PC-3 (cell line): ENCODE measurements at regions of chr12 and their contacts with region 1.

Region 1: GRCh38 chr12:107093417-107094182 is at the start of gene CRY1:
- DNase-seq: peak; percentile 98
- ATAC-seq: peak; percentile 75
- H3K4me3 ChIP-seq: peak within 1 kb of the TSS; percentile 72
- H3K27ac ChIP-seq: peak within 1 kb of the TSS; percentile 63
- H3K4me1 ChIP-seq: peaks cover 24% of the 10 kb centered on the region
- H3K27me3 ChIP-seq: no peaks in the 10 kb centered on the region
- CTCF ChIP-seq: no peak
- total RNA-seq, gene CRY1: 32.0 and 32.4 TPM in 2 replicates

Region 2: GRCh38 chr12:106790020-106790419 is 303.6 kb before region 1 on chr12:
- CTCF ChIA-PET with region 1: no interaction called
- POLR2A ChIA-PET with region 1: no interaction called
- intact Hi-C with region 1: no loop called
- DNase-seq: peak; percentile 28
- ATAC-seq: peak; percentile 61; the same call in 1 of the 2 replicates
- H3K4me3 ChIP-seq: no peak overlapping the region
- H3K27ac ChIP-seq: no peak overlapping the region
- H3K4me1 ChIP-seq: no peaks in the 10 kb centered on the region
- H3K27me3 ChIP-seq: no peaks in the 10 kb centered on the region
- CTCF ChIP-seq: peak; percentile 60

Region 3: DNA sequence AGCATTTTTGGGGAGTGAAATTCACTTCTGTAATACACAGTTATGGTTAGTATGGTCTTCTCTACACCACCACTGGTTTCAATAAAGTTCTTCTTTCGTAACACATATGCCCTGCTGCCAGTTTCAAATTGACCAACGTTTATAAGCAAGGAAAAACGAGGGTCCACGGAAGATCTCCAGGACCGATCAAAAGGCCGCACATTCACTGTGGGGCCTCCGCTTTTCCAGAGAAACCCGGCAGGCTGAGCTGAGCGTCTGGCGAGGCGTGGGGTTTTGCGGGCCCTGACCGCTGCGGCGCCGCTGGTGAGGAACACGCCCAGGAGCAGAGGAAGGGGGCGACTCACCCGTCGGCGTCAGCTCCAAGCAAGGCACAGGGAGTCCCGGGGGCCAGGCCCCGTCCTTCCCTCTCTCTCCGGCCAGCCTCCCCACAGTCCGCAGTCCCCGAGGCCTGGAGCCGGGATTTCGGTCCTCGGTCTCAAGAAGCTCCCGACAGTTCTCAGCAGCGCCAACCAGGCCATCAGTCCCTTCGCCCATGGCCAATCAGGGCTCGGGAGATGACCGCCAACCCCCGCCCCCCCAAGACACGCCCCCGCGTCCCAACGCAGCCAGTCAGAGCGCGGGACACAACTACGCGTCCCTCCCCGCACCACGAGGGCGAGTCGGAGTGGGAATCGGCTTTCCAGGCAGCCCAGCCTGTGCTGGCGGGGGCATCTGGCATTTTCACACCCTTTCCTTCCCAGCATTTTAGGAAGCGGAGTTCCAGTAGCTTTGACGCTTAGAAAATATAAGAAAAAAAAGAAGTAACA is 106.8 kb before region 1 on chr12 and contains the start of gene MTERF2:
- CTCF ChIA-PET with region 1: interaction called, 4 read pairs
- POLR2A ChIA-PET with region 1: interaction called, 4 read pairs
- intact Hi-C with region 1: loop called (anchors 1 kb)
- DNase-seq: peak; percentile 96
- ATAC-seq: peak; percentile 89
- H3K4me3 ChIP-seq: peak within 1 kb of the TSS; percentile 86
- H3K27ac ChIP-seq: 0 out of 2 replicates have a peak within 1 kb of the TSS, but pooled peaks have one; percentile 16
- H3K4me1 ChIP-seq: peaks cover 26% of the 10 kb centered on the region
- H3K27me3 ChIP-seq: no peaks in the 10 kb centered on the region
- CTCF ChIP-seq: no peak
- total RNA-seq, gene MTERF2: 10.7 and 14.2 TPM in 2 replicates

Region 4: GRCh38 chr12:107057071-107057818 is 36.4 kb before region 1 on chr12:
- CTCF ChIA-PET with region 1: interaction called, 4 read pairs
- POLR2A ChIA-PET with region 1: interaction called, 4 read pairs
- intact Hi-C with region 1: loop called (anchors 1 kb)
- DNase-seq: peak; percentile 95
- ATAC-seq: peak; percentile 97
- H3K4me3 ChIP-seq: no peak overlapping the region
- H3K27ac ChIP-seq: peak overlapping the region; percentile 64
- H3K4me1 ChIP-seq: peaks cover 7% of the 10 kb centered on the region
- H3K27me3 ChIP-seq: no peaks in the 10 kb centered on the region
- CTCF ChIP-seq: no peak; the same call in 1 of the 2 replicates

Region 5: DNA sequence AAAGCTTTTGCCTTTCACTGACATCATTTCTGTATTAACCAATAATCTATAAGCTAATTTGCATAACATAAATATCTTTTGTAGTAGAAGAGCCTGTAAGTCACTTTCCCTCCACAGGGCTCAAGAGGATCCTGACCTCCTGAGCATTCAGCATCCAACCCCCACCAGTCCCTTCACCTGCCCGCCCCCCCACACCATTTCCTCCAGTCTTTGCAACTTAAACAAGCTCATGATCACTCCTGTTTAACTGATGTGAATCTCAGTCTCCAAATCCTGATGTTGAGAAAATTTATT is 11.8 kb after region 1 on chr12:
- CTCF ChIA-PET with region 1: interaction called, 11 read pairs
- POLR2A ChIA-PET with region 1: no interaction called
- intact Hi-C with region 1: loop called (anchors 1 kb)
- DNase-seq: no peak
- ATAC-seq: peak; percentile 23
- H3K4me3 ChIP-seq: no peak overlapping the region
- H3K27ac ChIP-seq: no peak overlapping the region
- H3K4me1 ChIP-seq: peaks cover 7% of the 10 kb centered on the region; the same call in 1 of the 2 replicates
- H3K27me3 ChIP-seq: no peaks in the 10 kb centered on the region
- CTCF ChIP-seq: no peak

Region 6: DNA sequence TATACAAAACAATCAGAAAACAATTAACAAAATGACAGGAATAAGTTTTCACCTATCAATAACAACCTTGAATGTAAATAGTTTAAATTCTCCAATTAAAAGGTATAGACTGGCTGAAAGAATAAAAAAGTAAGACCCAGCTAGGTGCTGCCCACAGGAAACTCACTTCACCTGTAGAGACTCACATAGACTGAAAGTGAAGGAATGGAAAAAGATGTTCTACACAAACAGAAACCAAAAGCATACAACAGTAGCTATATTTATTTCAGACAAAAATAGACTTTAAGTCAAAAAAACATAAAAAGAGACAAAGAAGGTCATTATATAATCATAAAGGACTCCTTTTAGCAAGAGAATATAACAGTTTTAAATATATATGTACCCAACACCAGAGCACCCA is 439.6 kb after region 1 on chr12:
- CTCF ChIA-PET with region 1: no interaction called
- POLR2A ChIA-PET with region 1: no interaction called
- intact Hi-C with region 1: no loop called
- DNase-seq: no peak
- ATAC-seq: no peak
- H3K4me3 ChIP-seq: no peak overlapping the region
- H3K27ac ChIP-seq: no peak overlapping the region
- H3K4me1 ChIP-seq: no peaks in the 10 kb centered on the region
- H3K27me3 ChIP-seq: no peaks in the 10 kb centered on the region
- CTCF ChIP-seq: no peak